K562 (cell line): ENCODE measurements at regions of chr1 and their contacts with region 1.

Region 1: DNA sequence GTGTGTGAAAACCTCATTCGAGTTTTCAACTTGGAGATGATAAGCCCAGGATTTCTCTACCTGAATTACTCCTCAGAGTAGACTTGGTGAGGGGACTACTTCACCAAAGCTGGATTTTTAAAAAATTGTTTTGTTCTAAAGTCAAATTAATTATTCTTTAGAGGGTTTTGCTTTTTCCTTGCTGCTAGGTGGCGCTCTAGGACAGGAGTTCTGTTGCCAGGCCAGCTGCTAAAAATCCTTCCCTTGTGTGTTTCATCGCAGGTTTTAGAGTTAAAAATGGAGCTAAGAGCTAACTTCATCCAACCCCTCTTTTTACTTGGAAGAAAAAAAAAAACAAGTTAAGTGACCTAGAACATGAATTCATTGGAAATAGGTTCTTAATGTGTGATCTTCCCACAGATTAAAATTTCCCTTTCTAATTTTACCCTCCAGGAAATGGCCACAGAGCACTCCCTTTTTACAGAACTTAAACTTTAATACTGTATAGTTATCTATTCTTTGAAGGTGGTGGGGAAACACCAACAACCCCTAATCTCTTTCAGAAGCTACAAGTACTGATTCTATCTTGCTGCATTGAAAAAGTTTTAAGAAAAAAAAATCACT is 36.7 kb upstream of the FAM163A start:
- DNase-seq: peak; percentile 57 to 80 (median 62)
- ATAC-seq: peak; percentile 76
- H3K4me3 ChIP-seq: no peak overlapping the region
- H3K27ac ChIP-seq: no peak overlapping the region
- H3K4me1 ChIP-seq: no peaks in the 10 kb centered on the region
- H3K27me3 ChIP-seq: peaks cover 0 to 3% of the 10 kb centered on the region in 2 experiments; a peak in 2 of 5 replicates
- CTCF ChIP-seq: peak; percentile 86 to 98 (median 88)
- EP300 ChIP-seq: no peak
- POLR2A ChIP-seq: no peak
- RAD21 ChIP-seq: peak; percentile 94 to 95

Region 2: DNA sequence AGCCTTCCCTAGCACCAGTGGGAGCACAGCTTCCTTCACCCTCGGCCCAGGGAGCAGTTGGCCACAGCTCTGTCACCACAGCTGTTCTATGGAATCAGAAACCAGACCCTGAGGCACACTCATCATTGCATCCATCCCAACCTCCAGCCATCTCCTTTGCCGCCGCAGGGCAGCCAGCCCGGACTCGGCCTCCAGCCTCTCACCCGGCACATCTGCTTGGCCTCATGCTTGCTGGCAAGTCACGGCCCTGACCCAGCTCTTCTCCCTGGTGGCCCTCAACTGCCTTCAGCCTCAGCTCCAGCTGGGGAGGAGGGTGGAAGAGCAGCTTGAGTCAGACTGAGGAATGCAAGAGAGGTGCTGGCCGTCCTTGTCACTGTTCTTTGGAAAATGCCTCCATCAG is 111.3 kb after region 1 on chr1:
- CTCF ChIA-PET with region 1: interaction called, 20 read pairs
- POLR2A ChIA-PET with region 1: interaction called, 4 read pairs
- in situ Hi-C with region 1: no loop called
- intact Hi-C with region 1: loop called (anchors 1 kb)
- DNase-seq: no peak
- ATAC-seq: no peak
- H3K4me3 ChIP-seq: no peak overlapping the region
- H3K27ac ChIP-seq: no peak overlapping the region
- H3K4me1 ChIP-seq: peaks cover 20 to 30% of the 10 kb centered on the region in 2 experiments
- H3K27me3 ChIP-seq: peaks cover 31 to 48% of the 10 kb centered on the region in 2 experiments
- CTCF ChIP-seq: no peak
- EP300 ChIP-seq: no peak
- POLR2A ChIP-seq: no peak
- RAD21 ChIP-seq: no peak

Region 3: GRCh38 chr1:180178511-180179161 is 472.2 kb after region 1 on chr1:
- CTCF ChIA-PET with region 1: interaction called, 26 read pairs
- POLR2A ChIA-PET with region 1: interaction called, 3 read pairs
- in situ Hi-C with region 1: loop called (anchors 5 kb)
- intact Hi-C with region 1: loop called (anchors 1 kb)
- DNase-seq: peak; percentile 78 to 82 (median 80)
- ATAC-seq: peak; percentile 68
- H3K4me3 ChIP-seq: no peak overlapping the region
- H3K27ac ChIP-seq: no peak overlapping the region
- H3K4me1 ChIP-seq: no peaks in the 10 kb centered on the region
- H3K27me3 ChIP-seq: no peaks in the 10 kb centered on the region
- CTCF ChIP-seq: peak; percentile 91 to 99 (median 98)
- EP300 ChIP-seq: 0 out of 2 replicates have a peak, but pooled peaks have one; percentile 16
- POLR2A ChIP-seq: no peak
- RAD21 ChIP-seq: peak; percentile 93 to 97

Region 4: GRCh38 chr1:180241716-180242526 is 535.5 kb after region 1 on chr1:
- CTCF ChIA-PET with region 1: interaction called, 3 read pairs
- POLR2A ChIA-PET with region 1: interaction called, 3 read pairs
- in situ Hi-C with region 1: no loop called
- intact Hi-C with region 1: loop called (anchors 5 kb)
- DNase-seq: peak in 3 of 4 experiments; percentile 42 to 49 (median 45)
- ATAC-seq: peak; percentile 59
- H3K4me3 ChIP-seq: no peak overlapping the region
- H3K27ac ChIP-seq: no peak overlapping the region
- H3K4me1 ChIP-seq: no peaks in the 10 kb centered on the region
- H3K27me3 ChIP-seq: peaks cover 37 to 43% of the 10 kb centered on the region in 2 experiments
- CTCF ChIP-seq: no peak
- EP300 ChIP-seq: no peak
- POLR2A ChIP-seq: no peak
- RAD21 ChIP-seq: no peak

Region 5: DNA sequence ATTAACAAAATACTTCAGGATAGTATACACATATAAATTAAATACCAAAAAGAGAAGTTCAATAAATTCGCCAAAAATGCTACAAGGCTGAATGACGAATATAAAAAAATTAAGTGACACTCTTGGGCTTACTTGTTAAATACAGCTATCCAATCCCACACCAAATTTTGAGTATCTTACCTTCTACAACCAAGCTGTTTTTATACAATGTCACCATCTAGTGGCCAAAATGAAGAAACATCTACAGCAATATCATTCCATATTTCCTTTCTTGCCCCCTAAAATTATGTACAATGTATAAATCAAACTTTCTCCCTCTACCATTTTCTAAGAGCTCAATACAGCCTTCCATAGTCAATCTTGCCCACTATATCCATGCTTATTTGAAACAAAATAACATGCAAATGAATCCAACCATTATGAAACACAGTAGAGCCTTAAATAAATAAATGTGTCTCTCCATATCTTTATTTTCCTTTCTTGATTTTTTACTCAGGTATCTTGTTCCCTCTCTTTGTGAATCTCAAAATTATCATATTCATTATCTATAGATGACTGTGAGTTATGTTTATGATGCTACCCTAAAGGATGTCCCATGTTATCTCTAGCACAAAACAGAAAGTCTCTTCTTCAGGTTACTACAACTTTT is 709.7 kb after region 1 on chr1:
- CTCF ChIA-PET with region 1: no interaction called
- POLR2A ChIA-PET with region 1: no interaction called
- in situ Hi-C with region 1: loop called (anchors 10 kb)
- intact Hi-C with region 1: no loop called
- DNase-seq: peak; percentile 47 to 58 (median 48)
- ATAC-seq: peak; percentile 94
- H3K4me3 ChIP-seq: no peak overlapping the region
- H3K27ac ChIP-seq: no peak overlapping the region
- H3K4me1 ChIP-seq: no peaks in the 10 kb centered on the region
- H3K27me3 ChIP-seq: no peaks in the 10 kb centered on the region
- CTCF ChIP-seq: peak; percentile 48 to 88 (median 58); a peak in 5 of 6 replicates
- EP300 ChIP-seq: no peak
- POLR2A ChIP-seq: no peak
- RAD21 ChIP-seq: peak; percentile 62 to 88

Region 6: DNA sequence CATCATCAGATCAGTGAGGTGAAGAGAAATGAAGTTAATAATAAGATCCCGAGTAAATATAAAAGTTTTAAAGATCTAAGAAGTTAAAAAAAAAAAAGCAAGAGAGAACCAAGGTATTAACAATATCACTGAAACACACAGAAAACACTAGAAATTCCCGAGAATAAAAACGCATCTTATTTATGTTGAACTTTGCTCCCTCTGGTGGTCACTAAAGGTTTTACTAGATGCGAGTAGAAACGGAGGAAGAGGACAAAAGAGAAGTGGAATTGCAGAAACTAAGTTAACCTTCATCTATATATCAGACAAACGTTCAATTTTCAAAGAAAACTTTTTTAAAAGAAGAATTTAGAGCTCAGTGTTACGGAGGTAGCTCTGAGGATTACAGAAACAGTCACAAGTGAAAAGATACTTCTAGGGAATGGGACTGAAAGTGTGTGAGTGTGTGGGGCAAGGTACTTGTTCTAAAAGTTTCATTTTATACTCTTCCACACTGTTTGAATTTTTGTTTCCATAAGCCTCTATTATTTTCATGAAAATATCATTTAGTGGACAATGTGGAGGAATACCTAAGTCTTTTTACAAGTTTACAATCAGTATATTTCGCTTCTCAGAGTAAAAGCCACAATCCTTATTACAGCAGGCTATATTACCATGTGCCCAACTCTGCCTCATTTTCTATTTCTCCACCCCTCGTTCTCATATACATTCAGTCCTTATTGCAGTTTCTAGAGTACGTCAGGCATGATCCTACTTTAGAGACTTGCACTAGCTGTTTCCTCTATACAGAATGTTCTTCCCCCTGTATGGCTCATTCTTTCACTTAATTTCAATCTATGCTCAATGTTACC is 776.2 kb after region 1 on chr1:
- CTCF ChIA-PET with region 1: interaction called, 8 read pairs
- POLR2A ChIA-PET with region 1: no interaction called
- in situ Hi-C with region 1: no loop called
- intact Hi-C with region 1: loop called (anchors 2 kb)
- DNase-seq: peak; percentile 53 to 79 (median 54)
- ATAC-seq: peak; percentile 78
- H3K4me3 ChIP-seq: no peak overlapping the region
- H3K27ac ChIP-seq: no peak overlapping the region
- H3K4me1 ChIP-seq: no peaks in the 10 kb centered on the region
- H3K27me3 ChIP-seq: no peaks in the 10 kb centered on the region
- CTCF ChIP-seq: peak; percentile 64 to 82 (median 73); a peak in 5 of 6 replicates
- EP300 ChIP-seq: no peak
- POLR2A ChIP-seq: no peak
- RAD21 ChIP-seq: peak; percentile 49 to 64; a peak in 3 of 4 replicates